WTC11 (cell line): ENCODE measurements at regions of chr16 and their contacts with region 1.

Region 1: GRCh38 chr16:81932668-81933067 is 78.6 kb downstream of the SDR42E1 start:
- DNase-seq: no peak
- ATAC-seq: peak; percentile 66
- H3K4me3 Mint-ChIP-seq: no peak overlapping the region
- H3K27ac Mint-ChIP-seq: no peak overlapping the region
- H3K4me1 Mint-ChIP-seq: peaks cover 16% of the 10 kb centered on the region
- H3K27me3 Mint-ChIP-seq: no peaks in the 10 kb centered on the region
- CTCF ChIP-seq: no peak

Region 2: GRCh38 chr16:81868057-81868748 is 64.5 kb before region 1 on chr16:
- CTCF ChIA-PET with region 1: no interaction called
- POLR2A ChIA-PET with region 1: no interaction called
- DNase-seq: no peak
- ATAC-seq: no peak
- H3K4me3 Mint-ChIP-seq: no peak overlapping the region
- H3K27ac Mint-ChIP-seq: no peak overlapping the region
- H3K4me1 Mint-ChIP-seq: peaks cover 22% of the 10 kb centered on the region
- H3K27me3 Mint-ChIP-seq: peaks cover 5% of the 10 kb centered on the region
- CTCF ChIP-seq: no peak

Region 3: GRCh38 chr16:81894592-81894991 is 38.1 kb before region 1 on chr16:
- CTCF ChIA-PET with region 1: interaction called, 10 read pairs
- POLR2A ChIA-PET with region 1: no interaction called
- DNase-seq: no peak
- ATAC-seq: no peak
- H3K4me3 Mint-ChIP-seq: no peak overlapping the region
- H3K27ac Mint-ChIP-seq: no peak overlapping the region
- H3K4me1 Mint-ChIP-seq: no peaks in the 10 kb centered on the region
- H3K27me3 Mint-ChIP-seq: no peaks in the 10 kb centered on the region
- CTCF ChIP-seq: no peak

Region 4: GRCh38 chr16:82004631-82005490 is 72.2 kb after region 1 on chr16:
- CTCF ChIA-PET with region 1: no interaction called
- POLR2A ChIA-PET with region 1: no interaction called
- DNase-seq: no peak
- ATAC-seq: peak; percentile 66
- H3K4me3 Mint-ChIP-seq: no peak overlapping the region
- H3K27ac Mint-ChIP-seq: no peak overlapping the region
- H3K4me1 Mint-ChIP-seq: peaks cover 21% of the 10 kb centered on the region
- H3K27me3 Mint-ChIP-seq: peaks cover 10% of the 10 kb centered on the region
- CTCF ChIP-seq: no peak